Gastrocnemius medialis (tissue), 4 donors: ENCODE measurements at regions of chr10 and their contacts with region 1.

Region 1: GRCh38 chr10:51063659-51064535 is 10.4 kb upstream of the PRKG1 start:
- DNase-seq: no peak
- ATAC-seq: peak in 1 of 2 donors; percentile 41
- H3K4me3 ChIP-seq: no peak overlapping the region
- H3K27ac ChIP-seq: no peak overlapping the region
- H3K4me1 ChIP-seq: peaks cover 0 to 4% of the 10 kb centered on the region in 2 donors
- H3K27me3 ChIP-seq: no peaks in the 10 kb centered on the region
- CTCF ChIP-seq: peak; percentile 12 to 59 (median 49)
- POLR2A ChIP-seq: no peak

Region 2: GRCh38 chr10:50866317-50866716 is 197.6 kb before region 1 on chr10:
- in situ Hi-C with region 1: no loop called
- intact Hi-C with region 1: no loop called
- DNase-seq: peak in 1 of 2 donors; percentile 48
- ATAC-seq: peak; percentile 56 to 81
- H3K4me3 ChIP-seq: no peak overlapping the region
- H3K27ac ChIP-seq: no peak overlapping the region
- H3K4me1 ChIP-seq: no peaks in the 10 kb centered on the region
- H3K27me3 ChIP-seq: peaks cover 0 to 2% (median 0%) of the 10 kb centered on the region in 3 donors
- CTCF ChIP-seq: no peak
- POLR2A ChIP-seq: no peak

Region 3: DNA sequence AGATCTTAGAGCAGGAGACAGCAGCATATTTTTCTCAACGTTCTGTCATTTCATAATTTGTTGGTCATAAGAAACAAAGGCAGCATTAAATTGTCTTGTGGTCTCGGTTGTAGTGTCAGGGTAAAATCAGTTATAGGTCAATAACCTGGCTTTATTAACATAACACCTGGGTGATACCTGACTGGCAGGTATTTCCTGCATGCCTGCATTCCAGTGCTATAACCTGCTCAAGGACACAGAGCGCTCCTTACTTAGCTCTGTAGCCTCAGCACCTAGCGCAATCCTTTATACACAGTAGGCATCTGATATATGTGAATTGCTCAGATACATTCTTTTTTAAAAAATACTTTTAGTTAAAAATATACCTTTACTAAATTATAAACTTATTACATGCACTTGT is 28.6 kb before region 1 on chr10:
- in situ Hi-C with region 1: no loop called
- intact Hi-C with region 1: no loop called
- DNase-seq: no peak
- ATAC-seq: no peak
- H3K4me3 ChIP-seq: no peak overlapping the region
- H3K27ac ChIP-seq: no peak overlapping the region
- H3K4me1 ChIP-seq: peaks cover 0 to 19% of the 10 kb centered on the region in 2 donors
- H3K27me3 ChIP-seq: no peaks in the 10 kb centered on the region
- CTCF ChIP-seq: no peak
- POLR2A ChIP-seq: no peak

Region 4: DNA sequence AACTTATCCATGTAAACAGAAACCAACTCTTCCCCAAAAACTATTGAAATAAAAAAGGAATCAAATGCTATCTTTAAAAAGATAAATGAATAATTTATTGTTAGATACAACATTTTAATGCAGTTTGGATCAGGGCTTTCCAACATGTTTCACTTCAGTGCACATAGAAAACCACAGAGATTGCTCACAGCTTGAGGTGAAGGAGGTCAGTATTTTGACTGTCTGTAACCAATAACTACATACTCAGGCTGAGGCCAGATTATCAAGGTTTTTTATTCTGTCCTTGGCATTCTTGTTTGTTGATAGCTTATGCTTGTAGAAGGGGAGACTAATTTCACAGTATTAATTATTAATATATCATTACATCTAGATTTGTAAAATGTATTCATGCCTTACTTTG is 205.9 kb after region 1 on chr10:
- in situ Hi-C with region 1: no loop called
- intact Hi-C with region 1: no loop called
- DNase-seq: no peak
- ATAC-seq: no peak
- H3K4me3 ChIP-seq: no peak overlapping the region
- H3K27ac ChIP-seq: no peak overlapping the region
- H3K4me1 ChIP-seq: no peaks in the 10 kb centered on the region
- H3K27me3 ChIP-seq: no peaks in the 10 kb centered on the region
- CTCF ChIP-seq: no peak
- POLR2A ChIP-seq: no peak

Region 5: GRCh38 chr10:51340845-51341610 is 277.1 kb after region 1 on chr10:
- in situ Hi-C with region 1: no loop called
- intact Hi-C with region 1: no loop called
- DNase-seq: no peak
- ATAC-seq: no peak
- H3K4me3 ChIP-seq: no peak overlapping the region
- H3K27ac ChIP-seq: no peak overlapping the region
- H3K4me1 ChIP-seq: no peaks in the 10 kb centered on the region
- H3K27me3 ChIP-seq: no peaks in the 10 kb centered on the region
- CTCF ChIP-seq: no peak
- POLR2A ChIP-seq: no peak

Region 6: DNA sequence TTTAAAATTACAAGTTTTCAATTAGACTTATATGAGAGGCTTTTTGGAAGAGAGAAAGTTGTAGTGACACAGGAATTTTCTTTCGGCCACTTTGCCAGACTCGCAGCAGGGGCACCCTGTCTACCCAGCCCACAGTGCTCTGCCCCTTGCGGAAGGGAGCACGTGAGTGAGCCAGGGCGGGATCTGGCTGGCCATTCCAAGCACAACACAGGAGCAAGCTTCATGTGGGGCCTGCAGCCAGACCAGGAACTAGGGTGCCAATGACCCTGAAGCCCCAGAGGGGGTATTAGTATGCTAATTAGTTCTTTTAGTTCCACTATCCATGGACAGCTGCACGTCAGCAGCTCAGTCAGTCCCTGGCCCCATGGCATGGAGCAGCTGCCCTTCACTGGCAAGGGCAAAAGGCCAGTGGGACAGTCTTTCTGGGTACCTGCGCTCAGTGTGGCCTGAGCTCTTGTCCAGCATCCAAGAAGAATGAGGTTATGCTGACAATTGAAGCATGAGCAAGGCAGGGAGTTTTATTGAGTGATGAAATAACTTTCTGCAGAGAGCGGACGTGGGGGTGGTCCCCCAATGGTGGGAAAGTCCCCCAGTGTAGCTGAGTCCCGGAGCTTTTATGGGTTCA is 886.6 kb after region 1 on chr10:
- in situ Hi-C with region 1: loop called in 3 of 4 experiments (anchors 10 to 25 kb)
- intact Hi-C with region 1: no loop called
- DNase-seq: peak; percentile 17 to 44
- ATAC-seq: peak; percentile 70 to 81
- H3K4me3 ChIP-seq: peak overlapping the region in 1 of 4 donors; percentile 25
- H3K27ac ChIP-seq: peak overlapping the region; percentile 27 to 77 (median 69)
- H3K4me1 ChIP-seq: peaks cover 21 to 23% of the 10 kb centered on the region in 2 donors
- H3K27me3 ChIP-seq: no peaks in the 10 kb centered on the region
- CTCF ChIP-seq: no peak
- POLR2A ChIP-seq: no peak